Panc1 (cell line): ENCODE measurements at regions of chr2 and their contacts with region 1.

Region 1: DNA sequence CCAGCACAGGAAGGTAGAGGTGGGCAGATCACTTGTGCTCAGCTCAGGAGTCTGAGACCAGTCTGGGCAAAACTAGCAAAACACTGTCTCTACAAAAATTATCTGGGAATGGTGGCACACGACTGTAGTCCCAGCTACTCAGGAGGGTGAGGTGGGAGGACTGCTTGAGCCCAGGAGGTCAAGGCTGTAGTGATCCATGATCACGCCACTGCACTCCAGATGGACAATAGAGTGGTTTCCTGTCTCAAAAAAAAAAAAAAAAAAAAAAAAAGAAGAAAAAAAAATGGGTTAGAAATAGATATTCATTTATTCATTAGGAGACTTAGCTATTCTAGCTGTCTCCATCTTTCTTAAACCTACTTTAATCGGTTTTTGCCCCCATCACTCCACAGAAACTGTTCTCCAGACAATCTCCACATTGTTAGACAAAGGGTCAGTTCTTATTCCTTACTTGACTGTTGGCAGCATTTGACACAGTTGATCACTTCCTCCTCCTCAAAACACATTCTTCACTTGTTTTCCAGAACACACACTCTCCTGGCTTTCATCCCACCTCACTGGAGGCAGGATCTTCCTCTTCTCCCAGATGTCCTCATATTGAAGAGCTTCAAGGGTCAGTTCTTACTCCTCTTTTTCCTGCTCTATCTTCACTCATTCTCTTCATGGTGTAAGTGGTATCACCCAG is 103.1 kb downstream of the DTNB start:
- DNase-seq: no peak
- ATAC-seq: no peak
- H3K4me3 ChIP-seq: no peak overlapping the region
- H3K27ac ChIP-seq: no peak overlapping the region
- H3K4me1 ChIP-seq: no peaks in the 10 kb centered on the region
- H3K27me3 ChIP-seq: no peaks in the 10 kb centered on the region
- CTCF ChIP-seq: no peak

Region 2: GRCh38 chr2:24635181-24635580 is 935.1 kb before region 1 on chr2:
- CTCF ChIA-PET with region 1: no interaction called
- POLR2A ChIA-PET with region 1: no interaction called
- in situ Hi-C with region 1: no loop called
- intact Hi-C with region 1: no loop called
- DNase-seq: no peak
- ATAC-seq: no peak
- H3K4me3 ChIP-seq: no peak overlapping the region
- H3K27ac ChIP-seq: no peak overlapping the region
- H3K4me1 ChIP-seq: no peaks in the 10 kb centered on the region
- H3K27me3 ChIP-seq: no peaks in the 10 kb centered on the region
- CTCF ChIP-seq: no peak

Region 3: DNA sequence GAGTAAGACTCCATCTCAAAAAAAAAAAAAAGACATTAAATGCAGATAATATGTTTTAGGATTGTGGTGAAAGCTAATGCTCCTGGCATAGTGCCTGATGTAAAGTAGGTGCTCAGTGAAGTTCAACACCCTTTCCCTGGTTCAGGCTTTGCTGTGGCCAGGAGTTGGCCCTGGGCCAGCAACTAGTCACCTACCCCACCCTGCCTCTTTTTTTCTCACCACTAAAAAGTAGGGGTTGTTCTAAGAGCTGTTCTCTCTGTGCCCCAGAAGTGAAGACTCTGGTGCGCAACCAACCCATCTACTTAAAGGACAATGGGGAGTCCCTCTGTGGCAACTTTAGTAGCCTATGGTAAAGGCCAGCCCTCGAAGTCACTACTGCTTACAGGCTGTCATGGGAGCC is 304.5 kb before region 1 on chr2:
- CTCF ChIA-PET with region 1: no interaction called
- POLR2A ChIA-PET with region 1: no interaction called
- in situ Hi-C with region 1: no loop called
- intact Hi-C with region 1: no loop called
- DNase-seq: no peak
- ATAC-seq: no peak
- H3K4me3 ChIP-seq: no peak overlapping the region
- H3K27ac ChIP-seq: no peak overlapping the region
- H3K4me1 ChIP-seq: peaks cover 8% of the 10 kb centered on the region; the same call in 1 of the 2 replicates
- H3K27me3 ChIP-seq: no peaks in the 10 kb centered on the region
- CTCF ChIP-seq: no peak

Region 4: GRCh38 chr2:26164231-26164630 is 593.9 kb after region 1 on chr2:
- CTCF ChIA-PET with region 1: interaction called, 11 read pairs
- POLR2A ChIA-PET with region 1: no interaction called
- in situ Hi-C with region 1: no loop called
- intact Hi-C with region 1: no loop called
- DNase-seq: no peak
- ATAC-seq: no peak
- H3K4me3 ChIP-seq: no peak overlapping the region
- H3K27ac ChIP-seq: no peak overlapping the region
- H3K4me1 ChIP-seq: no peaks in the 10 kb centered on the region
- H3K27me3 ChIP-seq: no peaks in the 10 kb centered on the region
- CTCF ChIP-seq: no peak